CD4-positive, alpha-beta T cell (primary cell): ENCODE measurements at regions of chr14 and their contacts with region 1.

Region 1: GRCh38 chr14:49892636-49893308 is at the start of gene ARF6:
- DNase-seq: peak; percentile 86 to 98 (median 96)
- ATAC-seq: peak; percentile 69
- H3K4me3 ChIP-seq: peak within 1 kb of the TSS; percentile 96
- H3K4me3 Mint-ChIP-seq: peak within 1 kb of the TSS; percentile 98
- H3K27ac ChIP-seq: peak within 1 kb of the TSS; percentile 93 to 99
- H3K27ac Mint-ChIP-seq: peak within 1 kb of the TSS; percentile 96
- H3K4me1 ChIP-seq: peaks cover 19% of the 10 kb centered on the region
- H3K4me1 Mint-ChIP-seq: peaks cover 43% of the 10 kb centered on the region
- H3K27me3 ChIP-seq: no peaks in the 10 kb centered on the region
- H3K27me3 Mint-ChIP-seq: no peaks in the 10 kb centered on the region
- CTCF ChIP-seq: no peak
- total RNA-seq, gene ARF6: 67.2 to 69.7 TPM

Region 2: GRCh38 chr14:49852301-49853157 is 40.2 kb before region 1 on chr14 and contains the start of gene NEMF:
- CTCF ChIA-PET with region 1: interaction called, 3 read pairs
- POLR2A ChIA-PET with region 1: interaction called, 10 read pairs
- intact Hi-C with region 1: no loop called
- DNase-seq: peak; percentile 67 to 91 (median 72)
- ATAC-seq: peak; percentile 75
- H3K4me3 ChIP-seq: peak within 1 kb of the TSS; percentile 97
- H3K4me3 Mint-ChIP-seq: peak within 1 kb of the TSS; percentile 99
- H3K27ac ChIP-seq: peak within 1 kb of the TSS; percentile 64 to 80
- H3K27ac Mint-ChIP-seq: peak within 1 kb of the TSS; percentile 91
- H3K4me1 ChIP-seq: peaks cover 17% of the 10 kb centered on the region
- H3K4me1 Mint-ChIP-seq: peaks cover 46% of the 10 kb centered on the region
- H3K27me3 ChIP-seq: no peaks in the 10 kb centered on the region
- H3K27me3 Mint-ChIP-seq: no peaks in the 10 kb centered on the region
- CTCF ChIP-seq: peak; percentile 89
- total RNA-seq, gene NEMF: 96.0 to 97.7 TPM

Region 3: DNA sequence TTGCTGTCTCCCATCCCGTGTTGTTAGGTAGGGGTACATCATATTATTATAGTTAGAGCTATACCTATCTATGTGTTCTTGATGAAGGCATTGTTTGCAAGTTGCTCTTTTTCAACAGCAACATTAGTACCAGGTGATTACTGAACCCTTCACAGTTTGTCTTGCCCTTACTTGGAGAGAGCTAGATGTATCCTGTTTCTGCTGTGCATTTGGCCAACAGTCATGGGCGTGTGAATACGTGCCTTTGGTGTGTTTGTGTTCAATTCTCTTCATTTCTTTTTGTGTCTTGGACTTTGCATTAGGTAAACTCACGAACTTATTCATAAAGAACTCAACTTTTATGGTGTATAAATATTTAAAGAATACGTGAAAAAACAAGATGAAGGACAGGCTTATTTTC is 14.4 kb after region 1 on chr14:
- CTCF ChIA-PET with region 1: no interaction called
- POLR2A ChIA-PET with region 1: interaction called, 7 read pairs
- intact Hi-C with region 1: loop called in 1 of 2 experiments (anchors 2 kb)
- DNase-seq: no peak
- ATAC-seq: no peak
- H3K4me3 ChIP-seq: no peak overlapping the region
- H3K4me3 Mint-ChIP-seq: no peak overlapping the region
- H3K27ac ChIP-seq: no peak overlapping the region
- H3K27ac Mint-ChIP-seq: no peak overlapping the region
- H3K4me1 ChIP-seq: peaks cover 16% of the 10 kb centered on the region
- H3K4me1 Mint-ChIP-seq: peaks cover 27% of the 10 kb centered on the region
- H3K27me3 ChIP-seq: no peaks in the 10 kb centered on the region
- H3K27me3 Mint-ChIP-seq: no peaks in the 10 kb centered on the region
- CTCF ChIP-seq: no peak

Region 4: DNA sequence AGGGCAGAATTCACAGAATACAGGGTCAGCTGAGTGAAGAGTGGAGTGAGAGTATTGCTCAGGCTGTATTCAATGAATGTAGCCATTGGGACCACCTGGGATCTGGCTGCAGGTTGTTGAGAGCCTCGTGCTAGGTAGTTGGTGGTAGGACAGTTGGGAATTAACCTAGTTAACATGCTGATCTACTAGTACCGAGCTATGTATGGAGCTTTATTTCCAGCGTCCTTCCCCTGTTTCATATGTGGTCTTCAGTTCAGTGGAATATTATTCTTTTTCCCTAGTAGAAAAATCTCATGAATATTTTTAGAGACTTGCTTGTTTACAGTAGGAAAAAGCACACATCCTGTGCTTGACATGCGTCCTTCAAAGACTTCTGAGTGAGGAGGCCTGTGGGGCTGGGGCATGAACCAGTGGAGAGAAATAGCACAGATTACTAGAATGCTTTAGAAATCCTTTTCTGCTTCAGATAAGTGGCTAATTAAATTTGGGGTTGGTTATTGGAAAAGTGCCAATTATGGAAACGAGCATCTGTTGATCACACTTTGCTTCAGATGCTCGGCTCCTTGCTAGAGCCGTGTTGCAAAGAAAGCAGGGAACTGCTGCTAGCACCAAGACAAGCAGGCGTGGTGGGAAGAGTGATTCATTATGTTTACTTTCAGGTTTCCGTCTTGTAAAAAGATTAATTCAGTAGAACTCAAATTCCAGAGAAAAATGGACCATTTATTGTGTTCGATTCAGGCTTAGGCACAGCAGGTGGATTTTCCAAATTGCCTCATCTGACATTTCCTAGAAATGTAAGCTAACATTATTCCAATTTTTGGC is 53.8 kb after region 1 on chr14:
- CTCF ChIA-PET with region 1: no interaction called
- POLR2A ChIA-PET with region 1: interaction called, 14 read pairs
- intact Hi-C with region 1: loop called in 1 of 2 experiments (anchors 2 kb)
- DNase-seq: peak in 10 of 14 experiments; percentile 10 to 66 (median 26)
- ATAC-seq: peak; percentile 72
- H3K4me3 ChIP-seq: no peak overlapping the region
- H3K4me3 Mint-ChIP-seq: peak overlapping the region; percentile 56
- H3K27ac ChIP-seq: peak overlapping the region; percentile 69 to 86
- H3K27ac Mint-ChIP-seq: peak overlapping the region; percentile 88
- H3K4me1 ChIP-seq: peaks cover 66% of the 10 kb centered on the region
- H3K4me1 Mint-ChIP-seq: peaks cover 78% of the 10 kb centered on the region
- H3K27me3 ChIP-seq: no peaks in the 10 kb centered on the region
- H3K27me3 Mint-ChIP-seq: no peaks in the 10 kb centered on the region
- CTCF ChIP-seq: no peak

Region 5: DNA sequence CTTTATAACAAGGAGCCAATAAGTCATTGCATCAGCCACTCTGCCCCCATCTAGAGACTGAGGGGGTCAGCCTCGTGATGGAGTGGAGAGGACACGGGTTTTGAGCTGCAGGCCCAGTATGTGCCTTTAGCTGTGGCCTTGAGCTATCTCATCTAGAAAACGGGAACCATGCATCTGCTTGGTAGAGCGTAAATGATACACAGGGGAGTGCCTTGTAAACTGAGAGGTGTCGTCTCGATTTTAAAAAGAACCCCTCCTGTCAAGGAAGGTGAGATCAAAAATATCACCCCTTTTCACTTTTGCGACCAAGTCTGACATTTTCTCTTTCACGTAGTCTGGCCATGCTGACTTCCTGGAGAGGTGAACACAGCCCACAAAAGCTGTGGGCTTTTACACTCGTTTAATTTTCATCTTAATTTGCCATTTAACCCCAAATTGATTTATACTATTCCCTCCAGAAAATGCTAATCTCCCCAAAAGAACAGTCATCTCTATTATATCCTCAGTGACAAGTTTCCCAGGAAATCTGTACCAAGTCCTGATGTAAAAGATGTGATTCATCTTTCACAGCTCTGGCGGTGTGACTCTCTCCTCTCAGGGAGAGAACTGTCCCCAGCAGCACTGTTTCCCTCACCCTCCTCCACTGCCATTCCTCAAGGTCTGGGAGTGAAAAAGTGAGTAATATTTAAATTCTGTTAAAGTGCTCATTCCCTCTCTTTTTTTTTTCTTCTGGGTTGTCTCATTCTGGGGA is 193.0 kb after region 1 on chr14:
- CTCF ChIA-PET with region 1: no interaction called
- POLR2A ChIA-PET with region 1: interaction called, 10 read pairs
- intact Hi-C with region 1: loop called in 1 of 2 experiments (anchors 5 kb)
- DNase-seq: peak in 4 of 14 experiments; percentile 28 to 65 (median 55)
- ATAC-seq: no peak
- H3K4me3 ChIP-seq: no peak overlapping the region
- H3K4me3 Mint-ChIP-seq: peak overlapping the region; percentile 65
- H3K27ac ChIP-seq: peak overlapping the region; percentile 96 to 97
- H3K27ac Mint-ChIP-seq: peak overlapping the region; percentile 93
- H3K4me1 ChIP-seq: peaks cover 80% of the 10 kb centered on the region
- H3K4me1 Mint-ChIP-seq: peaks cover 89% of the 10 kb centered on the region
- H3K27me3 ChIP-seq: no peaks in the 10 kb centered on the region
- H3K27me3 Mint-ChIP-seq: no peaks in the 10 kb centered on the region
- CTCF ChIP-seq: no peak